ENCODE measurements at regions of chr1 and their contacts with region 1.

Region 1: GRCh38 chr1:32925403-32926162 is 24.4 kb upstream of the TMEM54 start:
- DNase-seq: peak; percentile 14
- H3K4me3 ChIP-seq: no peak overlapping the region
- H3K27ac ChIP-seq: no peak overlapping the region
- H3K4me1 ChIP-seq: no peaks in the 10 kb centered on the region
- H3K27me3 ChIP-seq: peaks cover 2 to 3% of the 10 kb centered on the region in 2 experiments
- CTCF ChIP-seq: no peak
- POLR2A ChIP-seq: no peak

Region 2: DNA sequence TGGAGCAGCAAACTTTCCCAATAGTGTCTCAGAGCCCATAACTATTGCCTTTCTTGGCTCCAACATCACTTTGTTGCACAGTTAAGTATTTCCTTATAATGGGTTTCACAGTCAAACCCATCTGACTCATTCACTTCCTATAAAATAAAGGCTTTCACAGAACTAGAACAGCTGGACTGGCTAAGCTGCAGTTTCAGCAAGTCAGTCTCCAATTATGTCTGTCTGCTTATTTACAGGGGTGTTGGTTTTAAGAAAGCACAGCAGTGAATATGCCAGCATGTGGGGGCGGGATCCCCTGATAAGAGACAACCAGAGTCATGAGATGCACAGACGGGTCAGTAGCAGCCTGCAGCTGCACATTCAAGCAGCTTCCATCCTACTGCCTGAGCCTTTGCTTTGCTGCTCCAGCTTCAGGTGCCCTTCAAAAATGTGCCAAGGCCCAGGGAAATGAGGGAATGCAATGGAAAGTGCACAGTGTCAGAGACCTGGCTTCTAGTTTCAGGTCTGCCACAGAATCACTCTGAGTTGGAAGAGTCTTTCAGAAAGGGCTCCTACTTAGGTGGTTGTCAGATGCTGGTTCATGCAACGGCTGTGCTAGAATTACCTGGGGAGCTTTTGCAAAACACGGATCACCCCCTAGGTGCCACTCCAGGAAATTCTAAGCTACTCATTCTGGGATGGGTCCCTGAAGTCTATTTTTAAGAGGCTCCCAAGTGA is 14.2 kb after region 1 on chr1:
- CTCF ChIA-PET with region 1: no interaction called
- POLR2A ChIA-PET with region 1: no interaction called
- dilution Hi-C with region 1: no loop called
- intact Hi-C with region 1: no loop called
- DNase-seq: peak; percentile 87
- H3K4me3 ChIP-seq: no peak overlapping the region
- H3K27ac ChIP-seq: peak overlapping the region; percentile 6
- H3K4me1 ChIP-seq: peaks cover 40% of the 10 kb centered on the region
- H3K27me3 ChIP-seq: no peaks in the 10 kb centered on the region
- CTCF ChIP-seq: no peak
- POLR2A ChIP-seq: no peak

Region 3: GRCh38 chr1:32981003-32981901 is 55.7 kb after region 1 on chr1:
- CTCF ChIA-PET with region 1: no interaction called
- POLR2A ChIA-PET with region 1: no interaction called
- dilution Hi-C with region 1: no loop called
- intact Hi-C with region 1: no loop called
- DNase-seq: peak; percentile 96
- H3K4me3 ChIP-seq: no peak overlapping the region
- H3K27ac ChIP-seq: peak overlapping the region; percentile 88
- H3K4me1 ChIP-seq: peaks cover 27% of the 10 kb centered on the region
- H3K27me3 ChIP-seq: no peaks in the 10 kb centered on the region
- CTCF ChIP-seq: no peak
- POLR2A ChIP-seq: no peak

Region 4: GRCh38 chr1:33055210-33056008 is 129.8 kb after region 1 on chr1:
- CTCF ChIA-PET with region 1: interaction called, 17 read pairs
- POLR2A ChIA-PET with region 1: no interaction called
- dilution Hi-C with region 1: no loop called
- intact Hi-C with region 1: loop called (anchors 2 kb)
- DNase-seq: peak; percentile 86
- H3K4me3 ChIP-seq: no peak overlapping the region
- H3K27ac ChIP-seq: no peak overlapping the region
- H3K4me1 ChIP-seq: peaks cover 2% of the 10 kb centered on the region
- H3K27me3 ChIP-seq: no peaks in the 10 kb centered on the region
- CTCF ChIP-seq: peak; percentile 65 to 78
- POLR2A ChIP-seq: no peak

Measured in endothelial cell of umbilical vein (primary cell).